ENCODE measurements at regions of chr10 and their contacts with region 1.

Region 1: GRCh38 chr10:92517034-92517655 is 56.7 kb downstream of the IDE start:
- DNase-seq: peak; percentile 68 to 75 (median 72)
- H3K4me3 ChIP-seq: no peak overlapping the region
- H3K4me3 Mint-ChIP-seq: no peak overlapping the region
- H3K27ac ChIP-seq: no peak overlapping the region
- H3K27ac Mint-ChIP-seq: peak overlapping the region in 5 of 7 donors; percentile 31 to 56 (median 53)
- H3K4me1 ChIP-seq: peaks cover 8% of the 10 kb centered on the region
- H3K4me1 Mint-ChIP-seq: peaks cover 6 to 8% (median 7%) of the 10 kb centered on the region in 4 donors
- H3K27me3 ChIP-seq: no peaks in the 10 kb centered on the region
- H3K27me3 Mint-ChIP-seq: no peaks in the 10 kb centered on the region

Region 2: DNA sequence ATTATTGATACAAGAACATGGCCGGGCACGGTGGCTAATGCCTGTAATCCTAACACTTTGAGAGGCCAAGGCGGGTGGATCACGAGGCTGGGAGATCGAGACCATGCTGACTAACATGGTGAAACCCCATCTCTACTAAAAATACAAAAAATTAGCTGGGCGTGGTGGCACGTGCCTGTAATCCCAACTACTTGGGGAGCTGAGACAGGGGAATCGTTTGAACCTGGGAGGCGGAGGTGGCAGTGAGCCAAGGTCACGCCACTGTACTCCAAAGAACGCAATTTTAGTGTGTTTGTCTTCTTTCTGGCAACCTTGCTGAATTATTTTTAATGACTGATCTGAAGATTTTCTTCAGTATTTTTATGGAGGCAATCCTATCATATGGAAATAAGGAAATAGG is 10.6 kb after region 1 on chr10:
- CTCF ChIA-PET with region 1: interaction called, 23 read pairs
- POLR2A ChIA-PET with region 1: no interaction called
- intact Hi-C with region 1: no loop called
- DNase-seq: no peak
- H3K4me3 ChIP-seq: no peak overlapping the region
- H3K4me3 Mint-ChIP-seq: no peak overlapping the region
- H3K27ac ChIP-seq: no peak overlapping the region
- H3K27ac Mint-ChIP-seq: peak overlapping the region in 2 of 7 donors; percentile 19 to 55
- H3K4me1 ChIP-seq: no peaks in the 10 kb centered on the region
- H3K4me1 Mint-ChIP-seq: no peaks in the 10 kb centered on the region
- H3K27me3 ChIP-seq: no peaks in the 10 kb centered on the region
- H3K27me3 Mint-ChIP-seq: no peaks in the 10 kb centered on the region

Region 3: DNA sequence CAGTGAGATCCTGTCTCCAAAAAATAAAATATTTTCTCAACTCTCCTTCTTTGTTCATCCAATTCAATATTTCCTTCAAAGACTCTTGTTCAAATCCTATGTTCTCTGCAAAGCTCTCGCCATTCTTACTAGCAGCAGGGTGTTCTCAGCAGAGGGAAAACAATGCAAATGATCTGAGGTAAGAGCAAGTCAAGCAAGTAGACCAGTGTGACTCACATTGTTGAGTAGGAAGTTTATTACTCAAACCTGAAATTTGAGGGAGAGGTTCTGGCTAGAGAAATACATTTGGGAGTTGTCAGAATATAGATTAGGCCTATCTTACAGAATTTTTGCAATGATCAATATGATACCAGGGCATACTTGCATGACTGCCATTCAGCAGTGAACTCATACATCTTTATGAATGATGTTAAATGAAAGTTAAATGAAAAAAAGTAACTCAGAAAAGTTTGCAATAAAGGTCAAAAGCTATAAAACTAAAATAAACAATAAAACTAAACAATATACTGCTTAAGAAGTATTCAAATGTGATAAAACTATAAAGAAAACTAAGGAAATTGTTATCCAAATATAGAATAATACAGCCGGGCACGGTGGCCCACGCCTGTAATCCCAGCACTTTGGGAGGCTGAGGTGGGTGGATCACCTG is 50.9 kb after region 1 on chr10:
- CTCF ChIA-PET with region 1: interaction called, 215 read pairs
- POLR2A ChIA-PET with region 1: interaction called, 25 read pairs
- intact Hi-C with region 1: no loop called
- DNase-seq: no peak
- H3K4me3 ChIP-seq: no peak overlapping the region
- H3K4me3 Mint-ChIP-seq: no peak overlapping the region
- H3K27ac ChIP-seq: no peak overlapping the region
- H3K27ac Mint-ChIP-seq: peak overlapping the region in 2 of 7 donors; percentile 17 to 60
- H3K4me1 ChIP-seq: peaks cover 30% of the 10 kb centered on the region
- H3K4me1 Mint-ChIP-seq: peaks cover 44 to 65% (median 54%) of the 10 kb centered on the region in 4 donors
- H3K27me3 ChIP-seq: no peaks in the 10 kb centered on the region
- H3K27me3 Mint-ChIP-seq: no peaks in the 10 kb centered on the region

Region 4: GRCh38 chr10:92644921-92645320 is 127.8 kb after region 1 on chr10:
- CTCF ChIA-PET with region 1: interaction called, 3 read pairs
- POLR2A ChIA-PET with region 1: no interaction called
- intact Hi-C with region 1: loop called (anchors 1 kb)
- DNase-seq: no peak
- H3K4me3 ChIP-seq: no peak overlapping the region
- H3K4me3 Mint-ChIP-seq: no peak overlapping the region
- H3K27ac ChIP-seq: no peak overlapping the region
- H3K27ac Mint-ChIP-seq: no peak overlapping the region
- H3K4me1 ChIP-seq: no peaks in the 10 kb centered on the region
- H3K4me1 Mint-ChIP-seq: peaks cover 0 to 6% (median 2%) of the 10 kb centered on the region in 4 donors
- H3K27me3 ChIP-seq: no peaks in the 10 kb centered on the region
- H3K27me3 Mint-ChIP-seq: no peaks in the 10 kb centered on the region

Measured in CD4-positive, alpha-beta memory T cell (primary cell).